ENCODE measurements at regions of chr16 and their contacts with region 1.

Region 1: GRCh38 chr16:19804538-19805323 is 79.9 kb downstream of the GPRC5B start:
- DNase-seq: peak; percentile 78 to 88 (median 84)
- ATAC-seq: peak; percentile 83 to 88 (median 84)
- H3K4me3 ChIP-seq: no peak overlapping the region
- H3K27ac ChIP-seq: peak overlapping the region in 11 of 12 donors; percentile 52 to 85 (median 75)
- H3K4me1 ChIP-seq: peaks cover 0 to 56% (median 23%) of the 10 kb centered on the region in 12 donors
- H3K27me3 ChIP-seq: no peaks in the 10 kb centered on the region
- CTCF ChIP-seq: no peak
- POLR2A ChIP-seq: no peak

Region 2: GRCh38 chr16:19601083-19601976 is 203.4 kb before region 1 on chr16:
- intact Hi-C with region 1: loop called in 1 of 10 experiments (anchors 5 kb)
- DNase-seq: no peak
- ATAC-seq: no peak
- H3K4me3 ChIP-seq: no peak overlapping the region
- H3K27ac ChIP-seq: no peak overlapping the region
- H3K4me1 ChIP-seq: peaks cover 0 to 14% (median 5%) of the 10 kb centered on the region in 12 donors
- H3K27me3 ChIP-seq: no peaks in the 10 kb centered on the region
- CTCF ChIP-seq: peak; percentile 53 to 81 (median 69)
- POLR2A ChIP-seq: no peak

Region 3: GRCh38 chr16:19696328-19696727 is 108.4 kb before region 1 on chr16:
- intact Hi-C with region 1: loop called in 1 of 10 experiments (anchors 5 kb)
- DNase-seq: peak; percentile 82 to 88 (median 86)
- ATAC-seq: peak; percentile 46 to 77 (median 61)
- H3K4me3 ChIP-seq: no peak overlapping the region
- H3K27ac ChIP-seq: peak overlapping the region; percentile 44 to 92 (median 82)
- H3K4me1 ChIP-seq: peaks cover 18 to 61% (median 45%) of the 10 kb centered on the region in 12 donors
- H3K27me3 ChIP-seq: no peaks in the 10 kb centered on the region
- CTCF ChIP-seq: no peak
- POLR2A ChIP-seq: no peak

Region 4: GRCh38 chr16:19717771-19718602 is 86.7 kb before region 1 on chr16 and contains the starts of genes IQCK and KNOP1:
- intact Hi-C with region 1: loop called in 3 of 10 experiments (anchors 5 to 10 kb)
- DNase-seq: peak; percentile 92 to 94 (median 93)
- ATAC-seq: peak; percentile 93 to 98 (median 98)
- H3K4me3 ChIP-seq: peak within 1 kb of the TSS; percentile 67 to 99 (median 87)
- H3K27ac ChIP-seq: peak within 1 kb of the TSS in 11 of 12 donors; percentile 75 to 94 (median 85)
- H3K4me1 ChIP-seq: peaks cover 0 to 44% (median 35%) of the 10 kb centered on the region in 12 donors
- H3K27me3 ChIP-seq: no peaks in the 10 kb centered on the region
- CTCF ChIP-seq: peak in 2 of 12 donors; percentile 18 to 19
- POLR2A ChIP-seq: peak in 1 of 2 donors; percentile 67
- total RNA-seq, gene IQCK: 5.7 to 17.4 (median 9.0) TPM
- total RNA-seq, gene KNOP1: 6.3 to 11.5 (median 7.9) TPM

Region 5: GRCh38 chr16:19753815-19754643 is 50.7 kb before region 1 on chr16:
- intact Hi-C with region 1: loop called in 2 of 10 experiments (anchors 5 to 10 kb)
- DNase-seq: no peak
- ATAC-seq: peak in 3 of 4 donors; percentile 52 to 75 (median 63)
- H3K4me3 ChIP-seq: no peak overlapping the region
- H3K27ac ChIP-seq: peak overlapping the region in 11 of 12 donors; percentile 37 to 87 (median 71)
- H3K4me1 ChIP-seq: peaks cover 0 to 74% (median 40%) of the 10 kb centered on the region in 12 donors
- H3K27me3 ChIP-seq: no peaks in the 10 kb centered on the region
- CTCF ChIP-seq: no peak
- POLR2A ChIP-seq: no peak

Region 6: DNA sequence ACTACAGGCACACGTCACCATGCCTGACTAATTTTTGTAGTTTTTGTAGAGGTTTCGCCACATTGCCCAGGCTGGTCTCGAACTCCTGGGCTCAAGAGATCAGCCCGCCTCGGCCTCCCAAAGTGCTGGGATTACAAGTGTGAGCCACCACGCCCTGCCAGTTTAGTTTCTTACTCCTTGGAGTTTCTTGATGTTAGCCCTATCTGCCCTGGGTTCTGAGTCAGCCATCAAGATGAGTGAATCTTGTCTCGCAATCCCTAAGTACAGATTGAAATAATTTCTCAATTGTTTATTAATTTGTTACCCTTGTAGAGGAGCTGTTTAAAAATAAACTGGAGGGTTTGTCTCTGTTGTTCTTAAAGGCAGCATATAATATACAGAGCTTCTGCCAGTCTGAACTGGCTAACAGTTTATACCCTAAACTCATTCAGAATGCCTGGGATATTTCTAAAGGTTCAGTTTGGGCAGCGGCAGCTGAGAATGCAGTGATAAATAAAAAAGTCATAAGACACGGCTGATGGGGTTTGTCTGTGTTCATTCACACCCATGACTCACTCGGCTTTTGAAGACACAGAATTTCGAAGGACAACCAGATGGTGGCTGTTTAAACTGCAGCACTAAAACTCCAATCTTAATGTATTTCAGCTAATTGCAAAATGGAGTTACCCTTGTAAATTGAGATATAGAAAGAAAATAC is 40.4 kb after region 1 on chr16:
- intact Hi-C with region 1: no loop called
- DNase-seq: no peak
- ATAC-seq: peak in 1 of 4 donors; percentile 16
- H3K4me3 ChIP-seq: no peak overlapping the region
- H3K27ac ChIP-seq: peak overlapping the region in 10 of 12 donors; percentile 5 to 70 (median 48)
- H3K4me1 ChIP-seq: peaks cover 0 to 25% (median 8%) of the 10 kb centered on the region in 12 donors
- H3K27me3 ChIP-seq: no peaks in the 10 kb centered on the region
- CTCF ChIP-seq: no peak
- POLR2A ChIP-seq: no peak

Region 7: DNA sequence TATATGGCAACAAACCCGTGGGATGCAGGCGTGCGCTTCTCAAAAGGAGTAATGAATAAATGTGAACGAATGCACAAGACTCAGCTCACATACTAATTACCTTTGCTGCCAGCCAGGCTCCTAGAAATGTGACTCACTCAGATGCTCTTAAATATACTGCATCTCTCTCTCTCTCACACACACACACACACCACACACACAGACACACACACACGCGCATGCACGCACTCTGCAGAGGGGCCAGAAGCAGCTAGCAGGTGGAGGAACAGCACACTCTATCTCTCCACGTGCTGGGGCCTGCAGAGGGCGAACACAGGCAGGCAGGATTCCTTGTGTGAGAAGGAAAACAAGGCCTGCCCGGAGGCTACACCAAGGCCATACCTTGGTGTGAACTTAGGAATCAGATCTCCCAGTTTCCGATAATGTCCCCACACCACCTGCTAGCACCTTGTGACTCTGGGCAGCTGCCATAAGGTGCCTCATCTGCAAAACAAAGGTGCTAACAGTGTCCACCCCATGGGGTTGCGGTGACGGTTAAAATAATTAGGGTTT is 74.6 kb after region 1 on chr16:
- intact Hi-C with region 1: loop called in 3 of 10 experiments (anchors 5 to 10 kb)
- DNase-seq: peak in 3 of 5 donors; percentile 36 to 75 (median 54)
- ATAC-seq: peak; percentile 28 to 64 (median 48)
- H3K4me3 ChIP-seq: no peak overlapping the region
- H3K27ac ChIP-seq: peak overlapping the region in 9 of 12 donors; percentile 22 to 96 (median 75)
- H3K4me1 ChIP-seq: peaks cover 10 to 85% (median 59%) of the 10 kb centered on the region in 12 donors
- H3K27me3 ChIP-seq: peaks cover 0 to 14% (median 0%) of the 10 kb centered on the region in 9 donors
- CTCF ChIP-seq: no peak
- POLR2A ChIP-seq: no peak

Region 8: DNA sequence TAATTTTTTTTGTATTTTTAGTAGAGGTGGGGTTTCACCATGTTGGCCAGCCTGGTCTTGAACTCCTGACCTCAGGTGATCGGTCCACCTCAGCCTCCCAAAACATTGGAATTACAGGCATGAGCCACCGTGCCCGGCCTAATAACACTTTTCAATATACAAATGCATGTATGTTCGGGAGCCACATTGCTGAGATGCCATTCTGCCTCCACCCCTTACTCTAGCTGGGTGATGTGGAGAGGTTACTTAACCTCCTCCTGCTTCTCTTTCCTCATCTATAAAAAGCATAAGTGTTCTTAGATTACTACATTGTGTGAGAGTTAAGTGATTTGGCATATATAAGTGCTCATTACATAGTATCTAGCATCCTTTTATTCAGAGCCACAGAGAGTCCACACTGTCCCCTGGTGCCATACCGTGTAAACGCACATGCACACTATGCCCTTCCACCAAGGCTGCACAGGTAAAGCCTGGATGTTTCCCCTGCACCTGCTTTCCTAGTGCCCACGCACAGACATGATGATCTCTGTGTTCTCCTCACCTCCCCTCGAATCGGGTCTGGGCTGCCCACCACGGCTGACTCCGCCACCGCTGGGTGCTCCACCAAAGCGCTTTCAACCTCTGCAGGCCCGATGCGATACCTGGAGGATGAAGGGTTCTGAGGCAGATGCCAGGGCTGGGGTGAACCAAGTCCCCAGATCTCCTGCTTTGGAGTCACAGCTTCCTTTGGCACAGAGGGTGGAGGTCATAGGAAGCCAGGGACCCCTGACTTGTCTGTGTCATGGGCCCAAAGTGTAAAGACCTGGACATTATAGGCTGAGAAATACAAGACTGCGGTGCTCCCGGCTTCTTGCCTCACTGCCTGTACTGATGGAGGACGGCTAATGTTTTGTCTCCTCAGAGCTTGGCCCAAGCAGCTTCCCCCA is 820.4 kb after region 1 on chr16:
- intact Hi-C with region 1: no loop called
- DNase-seq: no peak
- ATAC-seq: no peak
- H3K4me3 ChIP-seq: no peak overlapping the region
- H3K27ac ChIP-seq: no peak overlapping the region
- H3K4me1 ChIP-seq: peaks cover 0 to 9% (median 0%) of the 10 kb centered on the region in 12 donors
- H3K27me3 ChIP-seq: no peaks in the 10 kb centered on the region
- CTCF ChIP-seq: no peak
- POLR2A ChIP-seq: no peak

Measured in heart left ventricle (tissue), 16 donors.